ENCODE measurements at regions of chr12 and their contacts with region 1.

Region 1: GRCh38 chr12:114131824-114132223 is 165.7 kb upstream of the RBM19 start:
- DNase-seq: peak; percentile 14
- ATAC-seq: peak; percentile 91
- H3K4me3 Mint-ChIP-seq: no peak overlapping the region
- H3K27ac Mint-ChIP-seq: no peak overlapping the region
- H3K4me1 Mint-ChIP-seq: no peaks in the 10 kb centered on the region
- H3K27me3 Mint-ChIP-seq: peaks cover 20% of the 10 kb centered on the region
- CTCF ChIP-seq: no peak

Region 2: DNA sequence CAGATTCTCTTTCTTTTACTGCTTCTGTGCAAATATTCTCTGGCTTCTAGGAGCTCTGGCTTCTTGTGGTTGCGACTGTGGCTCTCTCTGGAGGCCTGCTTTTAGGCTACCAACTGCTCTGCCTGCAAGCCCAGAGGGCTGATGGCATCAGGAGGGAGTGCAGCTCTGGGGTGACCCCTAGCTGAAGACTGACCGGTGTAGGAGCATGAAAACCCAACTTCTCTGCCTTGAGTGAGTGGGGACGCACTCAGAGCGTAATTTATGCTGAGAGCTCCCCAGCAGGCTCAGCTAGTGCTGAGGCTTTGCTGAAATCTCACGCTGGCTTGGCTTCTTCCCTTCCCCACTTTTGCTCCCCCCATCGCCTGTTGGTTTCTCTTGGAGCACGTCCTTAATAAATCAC is 135.8 kb before region 1 on chr12:
- CTCF ChIA-PET with region 1: interaction called, 13 read pairs
- POLR2A ChIA-PET with region 1: no interaction called
- DNase-seq: peak; percentile 62
- ATAC-seq: peak; percentile 100
- H3K4me3 Mint-ChIP-seq: no peak overlapping the region
- H3K27ac Mint-ChIP-seq: no peak overlapping the region
- H3K4me1 Mint-ChIP-seq: peaks cover 5% of the 10 kb centered on the region; the same call in 1 of the 2 replicates
- H3K27me3 Mint-ChIP-seq: peaks cover 18% of the 10 kb centered on the region
- CTCF ChIP-seq: no peak

Region 3: GRCh38 chr12:114013575-114014345 is 118.1 kb before region 1 on chr12:
- CTCF ChIA-PET with region 1: interaction called, 11 read pairs
- POLR2A ChIA-PET with region 1: no interaction called
- DNase-seq: peak; percentile 52
- ATAC-seq: peak; percentile 80
- H3K4me3 Mint-ChIP-seq: no peak overlapping the region
- H3K27ac Mint-ChIP-seq: no peak overlapping the region
- H3K4me1 Mint-ChIP-seq: 0 out of 2 replicates have a peak, but pooled peaks cover 3% of the 10 kb centered on the region
- H3K27me3 Mint-ChIP-seq: peaks cover 8% of the 10 kb centered on the region
- CTCF ChIP-seq: no peak

Region 4: GRCh38 chr12:114274131-114274530 is 142.3 kb after region 1 on chr12:
- CTCF ChIA-PET with region 1: no interaction called
- POLR2A ChIA-PET with region 1: no interaction called
- DNase-seq: no peak
- ATAC-seq: no peak
- H3K4me3 Mint-ChIP-seq: no peak overlapping the region
- H3K27ac Mint-ChIP-seq: peak overlapping the region; percentile 94
- H3K4me1 Mint-ChIP-seq: peaks cover 82% of the 10 kb centered on the region
- H3K27me3 Mint-ChIP-seq: no peaks in the 10 kb centered on the region
- CTCF ChIP-seq: no peak

Region 5: GRCh38 chr12:114391088-114391487 is 259.3 kb after region 1 on chr12:
- CTCF ChIA-PET with region 1: no interaction called
- POLR2A ChIA-PET with region 1: no interaction called
- DNase-seq: no peak
- ATAC-seq: no peak
- H3K4me3 Mint-ChIP-seq: no peak overlapping the region
- H3K27ac Mint-ChIP-seq: no peak overlapping the region
- H3K4me1 Mint-ChIP-seq: peaks cover 62% of the 10 kb centered on the region
- H3K27me3 Mint-ChIP-seq: peaks cover 48% of the 10 kb centered on the region
- CTCF ChIP-seq: no peak